ENCODE measurements at regions of chr16 and their contacts with region 1.

Region 1: GRCh38 chr16:86568677-86569623 is 2.3 kb downstream of the FOXC2 start:
- DNase-seq: no peak
- H3K4me3 ChIP-seq: no peak overlapping the region
- H3K4me3 Mint-ChIP-seq: no peak overlapping the region
- H3K27ac Mint-ChIP-seq: no peak overlapping the region
- H3K4me1 ChIP-seq: peaks cover 5% of the 10 kb centered on the region; the same call in 1 of the 2 replicates
- H3K4me1 Mint-ChIP-seq: peaks cover 12% of the 10 kb centered on the region
- H3K27me3 ChIP-seq: no peaks in the 10 kb centered on the region
- H3K27me3 Mint-ChIP-seq: peaks cover 6% of the 10 kb centered on the region
- CTCF ChIP-seq: no peak

Region 2: GRCh38 chr16:86476956-86477530 is 91.9 kb before region 1 on chr16:
- CTCF ChIA-PET with region 1: no interaction called
- POLR2A ChIA-PET with region 1: no interaction called
- intact Hi-C with region 1: no loop called
- DNase-seq: no peak
- H3K4me3 ChIP-seq: no peak overlapping the region
- H3K4me3 Mint-ChIP-seq: no peak overlapping the region
- H3K27ac Mint-ChIP-seq: no peak overlapping the region
- H3K4me1 ChIP-seq: no peaks in the 10 kb centered on the region
- H3K4me1 Mint-ChIP-seq: peaks cover 6% of the 10 kb centered on the region
- H3K27me3 ChIP-seq: 0 out of 2 replicates have a peak, but pooled peaks cover 2% of the 10 kb centered on the region
- H3K27me3 Mint-ChIP-seq: peaks cover 24% of the 10 kb centered on the region
- CTCF ChIP-seq: no peak

Region 3: GRCh38 chr16:86545954-86546637 is 22.9 kb before region 1 on chr16:
- CTCF ChIA-PET with region 1: no interaction called
- POLR2A ChIA-PET with region 1: no interaction called
- intact Hi-C with region 1: no loop called
- DNase-seq: no peak
- H3K4me3 ChIP-seq: no peak overlapping the region
- H3K4me3 Mint-ChIP-seq: no peak overlapping the region
- H3K27ac Mint-ChIP-seq: no peak overlapping the region
- H3K4me1 ChIP-seq: no peaks in the 10 kb centered on the region
- H3K4me1 Mint-ChIP-seq: no peaks in the 10 kb centered on the region
- H3K27me3 ChIP-seq: no peaks in the 10 kb centered on the region
- H3K27me3 Mint-ChIP-seq: no peaks in the 10 kb centered on the region
- CTCF ChIP-seq: no peak

Region 4: GRCh38 chr16:86618811-86619794 is 50.2 kb after region 1 on chr16:
- CTCF ChIA-PET with region 1: no interaction called
- POLR2A ChIA-PET with region 1: interaction called, 11 read pairs
- intact Hi-C with region 1: no loop called
- DNase-seq: peak; percentile 51 to 86
- H3K4me3 ChIP-seq: peak overlapping the region; percentile 7; the same call in 1 of the 2 replicates
- H3K4me3 Mint-ChIP-seq: peak overlapping the region; percentile 52
- H3K27ac Mint-ChIP-seq: no peak overlapping the region
- H3K4me1 ChIP-seq: no peaks in the 10 kb centered on the region
- H3K4me1 Mint-ChIP-seq: no peaks in the 10 kb centered on the region
- H3K27me3 ChIP-seq: no peaks in the 10 kb centered on the region
- H3K27me3 Mint-ChIP-seq: peaks cover 8% of the 10 kb centered on the region
- CTCF ChIP-seq: no peak

Region 5: GRCh38 chr16:86631441-86631840 is 62.5 kb after region 1 on chr16:
- CTCF ChIA-PET with region 1: no interaction called
- POLR2A ChIA-PET with region 1: no interaction called
- intact Hi-C with region 1: no loop called
- DNase-seq: no peak
- H3K4me3 ChIP-seq: no peak overlapping the region
- H3K4me3 Mint-ChIP-seq: no peak overlapping the region
- H3K27ac Mint-ChIP-seq: no peak overlapping the region
- H3K4me1 ChIP-seq: no peaks in the 10 kb centered on the region
- H3K4me1 Mint-ChIP-seq: no peaks in the 10 kb centered on the region
- H3K27me3 ChIP-seq: no peaks in the 10 kb centered on the region
- H3K27me3 Mint-ChIP-seq: peaks cover 15% of the 10 kb centered on the region
- CTCF ChIP-seq: no peak

Measured in Caco-2 (cell line).